ENCODE measurements at regions of chr2 and their contacts with region 1.

Region 1: DNA sequence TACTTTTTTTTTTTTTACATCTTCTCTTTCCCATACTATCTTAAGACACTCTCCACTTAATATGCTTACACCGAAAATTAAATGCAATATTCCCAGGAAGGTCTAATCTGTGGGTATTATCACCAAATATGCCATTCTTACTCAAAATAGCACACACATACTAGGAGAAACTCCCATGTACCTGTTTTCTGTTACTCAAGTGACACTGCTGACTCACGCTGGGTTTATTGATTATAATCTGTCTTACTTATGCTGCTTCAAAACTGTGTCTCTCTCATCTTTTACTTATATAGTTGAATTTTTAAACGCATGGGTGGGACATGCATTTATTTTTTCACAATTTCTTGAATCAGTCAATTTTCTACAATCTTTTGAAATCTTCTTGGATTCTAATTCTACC is 29.9 kb downstream of the MRPL19 start:
- DNase-seq: no peak
- ATAC-seq: no peak
- H3K4me3 ChIP-seq: no peak overlapping the region
- H3K27ac ChIP-seq: no peak overlapping the region
- H3K4me1 ChIP-seq: peaks cover 7% of the 10 kb centered on the region
- H3K27me3 ChIP-seq: no peaks in the 10 kb centered on the region
- CTCF ChIP-seq: no peak
- EP300 ChIP-seq: no peak
- POLR2A ChIP-seq: no peak
- RAD21 ChIP-seq: no peak

Region 2: DNA sequence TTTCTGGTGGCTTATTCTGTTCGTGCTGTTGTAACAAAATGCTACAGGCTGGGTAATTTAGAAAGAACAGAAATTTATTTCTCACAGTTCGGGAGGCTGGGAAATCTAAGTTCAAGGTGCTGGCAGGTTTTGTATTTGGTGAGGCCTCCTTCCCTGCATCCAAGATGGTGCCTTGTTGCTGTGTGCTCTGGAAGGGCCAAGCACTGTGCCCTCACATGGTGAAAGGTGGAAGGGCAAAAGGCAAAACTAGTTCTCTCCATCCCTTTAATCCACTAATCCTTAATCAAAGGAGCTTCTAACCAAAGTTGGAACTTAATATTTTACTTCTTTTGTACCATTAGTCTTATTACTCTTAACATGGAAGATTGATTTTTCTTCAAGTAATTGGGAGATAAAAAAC is 22.5 kb before region 1 on chr2:
- CTCF ChIA-PET with region 1: interaction called, 11 read pairs
- POLR2A ChIA-PET with region 1: no interaction called
- RAD21 ChIA-PET with region 1: no interaction called
- SMC1A ChIA-PET with region 1: interaction called, 5 read pairs
- in situ Hi-C with region 1: no loop called
- intact Hi-C with region 1: loop called (anchors 2 kb)
- DNase-seq: no peak
- ATAC-seq: peak; percentile 34; the same call in 1 of the 3 replicates
- H3K4me3 ChIP-seq: no peak overlapping the region
- H3K27ac ChIP-seq: no peak overlapping the region
- H3K4me1 ChIP-seq: no peaks in the 10 kb centered on the region
- H3K27me3 ChIP-seq: no peaks in the 10 kb centered on the region
- CTCF ChIP-seq: 0 out of 6 replicates have a peak, but pooled peaks of 1 of the 3 experiments have one; percentile 7
- EP300 ChIP-seq: no peak
- POLR2A ChIP-seq: no peak
- RAD21 ChIP-seq: no peak

Region 3: GRCh38 chr2:75688196-75688595 is 11.7 kb after region 1 on chr2:
- CTCF ChIA-PET with region 1: interaction called, 30 read pairs
- POLR2A ChIA-PET with region 1: interaction called, 4 read pairs
- RAD21 ChIA-PET with region 1: interaction called, 4 read pairs
- SMC1A ChIA-PET with region 1: interaction called, 9 read pairs
- in situ Hi-C with region 1: no loop called
- intact Hi-C with region 1: no loop called
- DNase-seq: no peak
- ATAC-seq: no peak
- H3K4me3 ChIP-seq: no peak overlapping the region
- H3K27ac ChIP-seq: no peak overlapping the region
- H3K4me1 ChIP-seq: no peaks in the 10 kb centered on the region
- H3K27me3 ChIP-seq: no peaks in the 10 kb centered on the region
- CTCF ChIP-seq: no peak
- EP300 ChIP-seq: no peak
- POLR2A ChIP-seq: no peak
- RAD21 ChIP-seq: no peak